Right lobe of liver (tissue), 6 donors: ENCODE measurements at regions of chr19 and their contacts with region 1.

Region 1: GRCh38 chr19:41206926-41207750 is 11.9 kb upstream of the AXL start:
- DNase-seq: no peak
- ATAC-seq: no peak
- H3K4me3 ChIP-seq: no peak overlapping the region
- H3K27ac ChIP-seq: no peak overlapping the region
- H3K4me1 ChIP-seq: no peaks in the 10 kb centered on the region
- H3K27me3 ChIP-seq: no peaks in the 10 kb centered on the region
- CTCF ChIP-seq: no peak
- POLR2A ChIP-seq: no peak

Region 2: DNA sequence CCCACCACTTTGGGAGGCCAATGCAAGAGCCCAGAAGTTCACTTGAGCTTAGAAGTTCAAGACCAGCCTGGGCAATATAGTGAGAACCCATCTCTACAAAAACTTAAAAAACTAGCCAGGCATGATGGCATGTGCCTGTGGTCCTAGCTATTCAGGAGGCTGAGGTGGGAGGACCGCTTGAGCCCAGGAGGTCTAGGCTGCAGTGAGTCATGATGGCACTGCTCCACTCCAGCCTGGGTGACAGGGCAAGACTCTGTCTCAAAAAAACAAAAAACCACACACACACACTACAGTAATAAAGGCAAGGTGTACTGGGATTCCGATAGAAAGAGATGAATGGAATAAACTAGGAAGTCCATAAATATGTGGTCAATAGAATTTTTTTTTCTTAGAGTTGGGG is 57.3 kb before region 1 on chr19:
- intact Hi-C with region 1: no loop called
- DNase-seq: no peak
- ATAC-seq: no peak
- H3K4me3 ChIP-seq: no peak overlapping the region
- H3K27ac ChIP-seq: no peak overlapping the region
- H3K4me1 ChIP-seq: no peaks in the 10 kb centered on the region
- H3K27me3 ChIP-seq: no peaks in the 10 kb centered on the region
- CTCF ChIP-seq: no peak
- POLR2A ChIP-seq: no peak

Region 3: GRCh38 chr19:41255171-41255570 is 48.0 kb after region 1 on chr19:
- intact Hi-C with region 1: loop called (anchors 5 kb)
- DNase-seq: no peak
- ATAC-seq: no peak
- H3K4me3 ChIP-seq: no peak overlapping the region
- H3K27ac ChIP-seq: no peak overlapping the region
- H3K4me1 ChIP-seq: no peaks in the 10 kb centered on the region
- H3K27me3 ChIP-seq: no peaks in the 10 kb centered on the region
- CTCF ChIP-seq: no peak
- POLR2A ChIP-seq: no peak

Region 4: DNA sequence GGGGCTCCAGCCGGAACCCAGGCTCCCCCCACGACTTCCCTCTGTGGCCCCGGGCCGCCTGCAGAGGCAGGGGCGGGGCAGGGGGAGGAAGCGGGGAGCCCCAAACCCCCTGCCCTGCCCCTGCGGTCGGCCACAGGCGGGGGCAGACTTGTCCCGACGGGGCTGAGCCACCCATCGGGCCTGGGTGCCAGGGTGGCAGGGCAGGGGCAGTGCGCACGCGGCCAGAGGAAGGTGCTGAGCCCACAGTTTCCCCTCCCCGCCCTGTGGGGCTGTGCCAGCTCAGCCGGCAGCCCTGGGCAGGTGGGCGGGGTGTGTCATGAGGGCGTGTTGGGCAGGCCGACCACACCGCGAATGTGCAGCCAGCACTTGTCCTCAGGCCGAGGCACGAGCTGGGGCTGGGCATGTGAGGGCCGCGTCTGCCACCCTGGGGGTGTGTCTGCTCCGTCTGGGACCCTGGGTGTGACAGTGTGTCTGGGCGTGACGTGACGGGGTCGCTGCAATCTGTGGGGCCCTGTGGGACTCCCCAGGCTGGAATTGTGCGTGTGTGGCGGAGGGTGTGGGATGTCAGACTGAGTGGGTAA is 120.5 kb after region 1 on chr19:
- intact Hi-C with region 1: no loop called
- DNase-seq: peak; percentile 69 to 82 (median 81)
- ATAC-seq: peak; percentile 47 to 66 (median 63)
- H3K4me3 ChIP-seq: peak overlapping the region in 1 of 3 donors; percentile 31
- H3K27ac ChIP-seq: peak overlapping the region; percentile 21 to 75 (median 60)
- H3K4me1 ChIP-seq: peaks cover 0 to 22% (median 5%) of the 10 kb centered on the region in 4 donors
- H3K27me3 ChIP-seq: no peaks in the 10 kb centered on the region
- CTCF ChIP-seq: no peak
- POLR2A ChIP-seq: no peak